ENCODE measurements at regions of chr19 and their contacts with region 1.

Region 1: DNA sequence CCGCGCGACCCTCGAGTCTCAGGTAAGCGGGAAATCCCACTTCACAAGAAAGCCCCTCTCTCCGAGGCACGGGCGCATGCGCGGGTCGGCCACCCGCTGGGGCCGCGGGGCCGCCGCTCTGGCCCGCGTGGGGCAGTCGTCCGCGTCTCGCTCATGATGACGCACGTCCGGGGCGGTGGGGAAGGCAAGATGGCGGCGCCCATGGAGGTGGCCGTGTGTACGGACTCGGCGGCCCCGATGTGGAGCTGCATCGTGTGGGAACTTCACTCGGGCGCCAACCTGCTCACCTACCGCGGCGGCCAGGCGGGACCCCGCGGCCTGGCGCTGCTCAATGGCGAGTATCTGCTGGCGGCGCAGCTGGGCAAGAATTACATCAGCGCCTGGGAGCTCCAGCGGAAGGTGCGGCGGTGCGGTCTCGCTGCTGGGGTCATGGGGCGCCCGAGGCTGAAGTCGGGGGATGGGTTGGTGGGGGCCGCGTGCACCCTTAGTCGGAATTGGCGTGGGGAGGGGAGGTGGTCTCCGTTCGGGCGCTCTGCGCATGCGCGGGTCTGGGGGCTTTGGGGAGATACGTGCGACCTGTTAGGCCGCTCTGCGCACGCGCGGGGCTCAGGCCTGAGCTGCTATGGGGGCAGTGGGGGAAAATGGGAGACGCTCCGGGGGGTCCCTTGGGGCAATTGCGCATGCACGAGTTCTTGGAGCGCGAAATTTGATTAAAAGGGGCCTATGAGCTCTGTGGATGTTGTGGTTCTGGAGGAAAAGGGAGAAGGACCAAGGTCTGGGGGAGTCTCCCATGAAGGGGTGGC is at the start of gene WDR18:
- DNase-seq: peak; percentile 76 to 95
- H3K4me3 ChIP-seq: peak within 1 kb of the TSS; percentile 87 to 99 (median 92)
- H3K27ac ChIP-seq: peak within 1 kb of the TSS; percentile 96
- H3K4me1 ChIP-seq: peaks cover 0 to 14% (median 9%) of the 10 kb centered on the region in 4 experiments; a peak in 5 of 7 replicates
- H3K27me3 ChIP-seq: no peaks in the 10 kb centered on the region
- CTCF ChIP-seq: no peak
- EP300 ChIP-seq: no peak
- POLR2A ChIP-seq: peak; percentile 66 to 76
- RAD21 ChIP-seq: no peak
- total RNA-seq, gene WDR18: 87.7 and 90.1 TPM in 2 replicates

Region 2: DNA sequence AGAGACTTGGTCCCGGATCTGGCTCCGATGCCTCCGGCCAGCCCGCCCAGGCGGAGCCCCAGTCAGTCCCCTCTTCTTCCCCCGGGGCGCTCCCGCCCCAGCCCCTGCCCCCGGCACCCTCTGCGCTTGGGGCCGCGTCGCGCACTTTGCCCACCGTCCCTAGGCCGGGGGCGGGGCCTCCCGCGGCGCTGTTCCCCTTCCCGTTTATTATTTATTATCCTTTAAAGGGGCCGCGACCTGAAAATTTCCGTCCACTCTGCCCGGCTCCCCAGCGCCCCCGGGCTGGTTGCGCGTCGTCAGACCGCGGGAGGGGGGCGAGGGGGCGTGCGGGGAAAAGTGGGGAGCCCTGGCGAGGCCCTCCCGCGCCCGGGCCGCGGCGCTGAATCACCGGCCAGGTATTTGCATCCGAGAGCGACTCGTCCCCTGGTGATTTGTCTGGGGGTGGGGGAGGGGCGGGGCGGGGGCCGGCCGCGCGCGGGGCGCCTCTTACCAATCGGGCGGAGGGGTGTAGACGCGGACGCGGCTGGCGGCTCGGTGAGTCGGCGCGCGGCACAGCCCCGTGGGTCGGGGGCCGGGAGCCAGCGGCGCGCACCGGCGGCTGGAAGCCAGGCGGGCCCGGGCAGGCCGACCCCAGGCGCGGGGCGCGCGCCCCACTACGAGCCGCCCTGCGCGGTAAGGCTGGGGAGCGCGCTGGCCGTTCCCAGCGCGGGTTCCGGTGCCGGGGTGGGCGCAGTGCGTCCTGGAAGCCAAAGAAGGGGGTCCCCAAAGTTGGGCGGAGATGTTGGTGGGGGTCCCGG is 58.6 kb before region 1 on chr19 and contains the start of gene ARID3A:
- CTCF ChIA-PET with region 1: interaction called, 113 read pairs
- POLR2A ChIA-PET with region 1: interaction called, 11 read pairs
- DNase-seq: peak in 1 of 2 experiments; percentile 75
- H3K4me3 ChIP-seq: peak within 1 kb of the TSS; percentile 65 to 97 (median 76)
- H3K27ac ChIP-seq: peak within 1 kb of the TSS; percentile 39; the same call in 1 of the 2 replicates
- H3K4me1 ChIP-seq: peaks cover 2 to 8% (median 6%) of the 10 kb centered on the region in 4 experiments
- H3K27me3 ChIP-seq: peaks cover 6 to 8% (median 8%) of the 10 kb centered on the region in 4 experiments
- CTCF ChIP-seq: no peak
- EP300 ChIP-seq: no peak
- POLR2A ChIP-seq: no peak
- RAD21 ChIP-seq: no peak
- total RNA-seq, gene ARID3A: 77.4 and 78.4 TPM in 2 replicates

Region 3: GRCh38 chr19:1000095-1000494 is 15.7 kb after region 1 on chr19 and contains the start of gene GRIN3B:
- CTCF ChIA-PET with region 1: interaction called, 9 read pairs
- POLR2A ChIA-PET with region 1: interaction called, 33 read pairs
- DNase-seq: peak in 1 of 2 experiments; percentile 89
- H3K4me3 ChIP-seq: peak within 1 kb of the TSS; percentile 9 to 67 (median 30); a peak in 5 of 8 replicates
- H3K27ac ChIP-seq: no peak within 1 kb of the TSS
- H3K4me1 ChIP-seq: peaks cover 0 to 10% (median 6%) of the 10 kb centered on the region in 4 experiments; a peak in 3 of 7 replicates
- H3K27me3 ChIP-seq: peaks cover 6 to 33% (median 19%) of the 10 kb centered on the region in 4 experiments
- CTCF ChIP-seq: peak; percentile 78 to 87 (median 86)
- EP300 ChIP-seq: no peak
- POLR2A ChIP-seq: no peak
- RAD21 ChIP-seq: peak; percentile 32 to 46
- total RNA-seq, gene GRIN3B: 0.45 and 0.63 TPM in 2 replicates

Region 4: DNA sequence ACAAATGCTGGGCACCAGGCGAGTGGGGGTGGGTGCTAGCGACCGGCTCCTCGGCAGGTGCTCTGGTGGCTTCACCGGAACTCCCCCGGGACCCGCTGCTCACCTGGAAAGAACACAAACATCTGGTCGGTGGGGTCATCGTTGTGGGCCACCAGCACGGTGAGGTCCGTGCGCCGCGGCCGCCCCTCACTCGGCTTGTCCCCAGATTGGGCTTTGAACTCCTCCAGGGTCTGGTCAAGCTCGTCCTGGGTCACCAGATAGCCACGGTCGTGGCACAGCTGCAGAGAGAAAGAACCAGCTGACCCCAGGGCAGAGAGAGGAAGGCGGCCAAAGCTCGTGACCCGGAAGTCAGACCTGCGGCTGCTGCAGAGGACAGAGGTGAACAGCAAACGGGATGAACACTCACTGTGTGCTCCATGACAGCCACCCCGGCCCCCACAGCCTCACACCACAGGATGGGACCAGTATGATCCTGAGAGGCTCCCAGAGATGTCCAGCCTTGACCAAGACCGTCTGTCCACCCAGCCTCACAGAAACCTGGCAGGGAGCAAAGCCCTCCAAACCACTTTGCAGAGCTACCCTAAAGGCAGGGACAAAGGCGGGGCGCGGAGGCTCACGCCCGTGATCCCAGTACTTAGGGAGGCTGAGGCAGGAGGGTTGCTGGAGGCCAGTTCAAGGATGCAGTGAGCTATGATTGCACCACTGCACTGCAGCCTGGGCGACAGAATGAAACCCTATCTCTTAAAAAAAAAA is 109.6 kb after region 1 on chr19:
- CTCF ChIA-PET with region 1: no interaction called
- POLR2A ChIA-PET with region 1: no interaction called
- DNase-seq: no peak
- H3K4me3 ChIP-seq: peak overlapping the region; percentile 64 to 95 (median 91); a peak in 7 of 8 replicates
- H3K27ac ChIP-seq: no peak overlapping the region
- H3K4me1 ChIP-seq: peaks cover 0 to 8% (median 5%) of the 10 kb centered on the region in 4 experiments; a peak in 4 of 7 replicates
- H3K27me3 ChIP-seq: peaks cover 0 to 2% (median 0%) of the 10 kb centered on the region in 4 experiments; a peak in 1 of 7 replicates
- CTCF ChIP-seq: no peak
- EP300 ChIP-seq: no peak
- POLR2A ChIP-seq: no peak
- RAD21 ChIP-seq: no peak

Measured in H1 (cell line).